ENCODE measurements at regions of chr19 and their contacts with region 1.

Region 1: GRCh38 chr19:12333162-12334159 is at the start of gene ZNF563:
- DNase-seq: peak; percentile 96 to 98 (median 96)
- H3K4me3 ChIP-seq: peak within 1 kb of the TSS; percentile 74 to 82
- H3K4me3 Mint-ChIP-seq: peak within 1 kb of the TSS; percentile 96 to 100 (median 99)
- H3K27ac ChIP-seq: peak within 1 kb of the TSS; percentile 80
- H3K27ac Mint-ChIP-seq: peak within 1 kb of the TSS; percentile 83 to 99 (median 99)
- H3K4me1 ChIP-seq: peaks cover 27% of the 10 kb centered on the region
- H3K4me1 Mint-ChIP-seq: peaks cover 28 to 42% (median 37%) of the 10 kb centered on the region in 4 donors
- H3K27me3 ChIP-seq: no peaks in the 10 kb centered on the region
- H3K27me3 Mint-ChIP-seq: no peaks in the 10 kb centered on the region
- total RNA-seq, gene ZNF563: 15.0 to 15.6 TPM

Region 2: DNA sequence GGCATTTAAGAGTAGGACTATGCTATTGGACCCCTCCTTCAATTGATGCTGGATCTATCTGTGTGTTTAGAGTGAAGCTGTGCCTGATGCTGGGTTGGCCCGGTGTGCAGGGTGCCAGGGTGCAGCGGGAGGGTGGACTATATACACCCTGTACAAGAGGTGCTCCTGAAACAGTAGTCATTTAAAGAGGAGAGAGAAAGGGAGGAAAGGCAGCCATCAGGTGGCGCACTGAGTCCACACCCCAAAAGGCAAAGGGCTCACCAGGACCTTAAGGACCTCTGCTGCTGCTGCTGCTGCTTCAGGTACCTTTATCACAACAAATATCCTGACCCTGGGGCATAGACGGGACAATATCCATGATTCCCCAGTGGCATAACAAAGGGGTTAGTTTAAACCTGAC is 131.2 kb before region 1 on chr19:
- CTCF ChIA-PET with region 1: interaction called, 4 read pairs
- POLR2A ChIA-PET with region 1: interaction called, 3 read pairs
- intact Hi-C with region 1: loop called (anchors 5 kb)
- DNase-seq: peak; percentile 41 to 57 (median 50)
- H3K4me3 ChIP-seq: no peak overlapping the region
- H3K4me3 Mint-ChIP-seq: no peak overlapping the region
- H3K27ac ChIP-seq: no peak overlapping the region
- H3K27ac Mint-ChIP-seq: no peak overlapping the region
- H3K4me1 ChIP-seq: peaks cover 8% of the 10 kb centered on the region
- H3K4me1 Mint-ChIP-seq: peaks cover 6 to 24% (median 6%) of the 10 kb centered on the region in 4 donors
- H3K27me3 ChIP-seq: no peaks in the 10 kb centered on the region
- H3K27me3 Mint-ChIP-seq: no peaks in the 10 kb centered on the region

Region 3: DNA sequence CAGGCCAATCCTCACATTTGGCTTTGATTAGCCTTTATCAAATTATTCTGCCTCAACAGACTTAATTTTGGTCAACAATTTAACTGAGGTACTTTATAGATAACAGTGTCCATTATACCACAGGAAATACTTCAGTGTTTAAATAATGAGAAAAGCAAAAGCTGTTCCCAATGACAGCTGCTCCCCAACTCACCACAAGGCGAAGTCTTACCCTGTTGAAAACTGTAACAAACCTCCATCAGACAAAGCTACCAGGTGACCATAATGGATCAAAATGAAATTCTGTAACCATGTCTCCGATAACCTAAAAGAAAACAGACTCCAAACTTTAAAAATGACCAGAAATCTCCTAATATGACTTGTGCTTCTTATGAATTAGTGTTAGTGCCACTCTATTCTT is 89.1 kb before region 1 on chr19:
- CTCF ChIA-PET with region 1: no interaction called
- POLR2A ChIA-PET with region 1: no interaction called
- intact Hi-C with region 1: no loop called
- DNase-seq: no peak
- H3K4me3 ChIP-seq: no peak overlapping the region
- H3K4me3 Mint-ChIP-seq: no peak overlapping the region
- H3K27ac ChIP-seq: no peak overlapping the region
- H3K27ac Mint-ChIP-seq: no peak overlapping the region
- H3K4me1 ChIP-seq: no peaks in the 10 kb centered on the region
- H3K4me1 Mint-ChIP-seq: no peaks in the 10 kb centered on the region
- H3K27me3 ChIP-seq: no peaks in the 10 kb centered on the region
- H3K27me3 Mint-ChIP-seq: no peaks in the 10 kb centered on the region

Region 4: DNA sequence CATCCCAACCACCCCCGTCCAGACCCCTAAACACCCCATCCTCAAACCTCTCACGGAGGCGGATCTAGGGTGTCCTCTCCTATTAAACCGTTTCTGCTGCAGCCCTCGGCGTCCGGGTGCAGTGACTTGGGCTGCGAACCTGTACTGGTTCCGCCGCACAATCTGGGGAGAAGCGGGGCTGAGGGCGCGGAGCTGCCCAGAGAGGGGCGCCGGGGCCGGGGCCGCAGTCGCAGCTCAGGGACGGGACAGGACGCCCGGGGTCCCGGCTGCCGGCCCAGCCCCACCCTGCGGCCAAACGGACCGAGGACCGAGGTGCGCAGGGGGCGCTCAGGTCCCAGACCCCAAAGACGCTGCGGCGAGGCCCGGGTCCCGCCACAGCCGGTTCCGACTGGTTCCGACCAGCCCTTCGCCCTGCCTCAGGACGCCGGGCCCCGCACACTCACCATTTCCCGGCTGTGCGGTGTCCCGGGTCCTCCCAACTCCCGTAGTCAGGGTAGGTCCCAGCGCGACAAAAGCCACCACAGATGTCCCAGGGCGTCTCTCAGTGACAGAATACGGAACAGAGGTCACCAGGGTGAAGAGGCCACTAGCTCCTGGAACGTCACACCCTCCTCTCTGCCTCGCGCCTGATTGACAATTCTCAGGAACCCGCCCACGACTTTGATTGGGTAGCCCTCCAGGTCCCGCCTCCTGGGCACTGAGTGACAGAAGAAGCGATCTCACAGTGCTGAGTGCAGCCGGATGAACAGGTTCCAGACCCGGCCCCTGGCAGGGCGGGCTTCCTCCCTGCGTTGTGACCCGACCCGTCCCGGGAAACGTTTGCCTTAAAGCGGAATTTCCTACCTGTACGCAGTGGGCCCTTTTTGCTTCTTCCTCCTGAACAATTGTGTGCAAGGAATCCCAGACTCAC is 39.0 kb before region 1 on chr19 and contains the start of gene ZNF44:
- CTCF ChIA-PET with region 1: no interaction called
- POLR2A ChIA-PET with region 1: interaction called, 148 read pairs
- intact Hi-C with region 1: loop called (anchors 1 kb)
- DNase-seq: peak; percentile 93 to 97 (median 94)
- H3K4me3 ChIP-seq: peak within 1 kb of the TSS; percentile 73 to 79
- H3K4me3 Mint-ChIP-seq: peak within 1 kb of the TSS; percentile 99 to 100 (median 99)
- H3K27ac ChIP-seq: peak within 1 kb of the TSS; percentile 80
- H3K27ac Mint-ChIP-seq: peak within 1 kb of the TSS; percentile 97 to 100 (median 99)
- H3K4me1 ChIP-seq: peaks cover 37% of the 10 kb centered on the region
- H3K4me1 Mint-ChIP-seq: peaks cover 26 to 44% (median 36%) of the 10 kb centered on the region in 4 donors
- H3K27me3 ChIP-seq: no peaks in the 10 kb centered on the region
- H3K27me3 Mint-ChIP-seq: no peaks in the 10 kb centered on the region
- total RNA-seq, gene ZNF44: 62.2 TPM

Region 5: DNA sequence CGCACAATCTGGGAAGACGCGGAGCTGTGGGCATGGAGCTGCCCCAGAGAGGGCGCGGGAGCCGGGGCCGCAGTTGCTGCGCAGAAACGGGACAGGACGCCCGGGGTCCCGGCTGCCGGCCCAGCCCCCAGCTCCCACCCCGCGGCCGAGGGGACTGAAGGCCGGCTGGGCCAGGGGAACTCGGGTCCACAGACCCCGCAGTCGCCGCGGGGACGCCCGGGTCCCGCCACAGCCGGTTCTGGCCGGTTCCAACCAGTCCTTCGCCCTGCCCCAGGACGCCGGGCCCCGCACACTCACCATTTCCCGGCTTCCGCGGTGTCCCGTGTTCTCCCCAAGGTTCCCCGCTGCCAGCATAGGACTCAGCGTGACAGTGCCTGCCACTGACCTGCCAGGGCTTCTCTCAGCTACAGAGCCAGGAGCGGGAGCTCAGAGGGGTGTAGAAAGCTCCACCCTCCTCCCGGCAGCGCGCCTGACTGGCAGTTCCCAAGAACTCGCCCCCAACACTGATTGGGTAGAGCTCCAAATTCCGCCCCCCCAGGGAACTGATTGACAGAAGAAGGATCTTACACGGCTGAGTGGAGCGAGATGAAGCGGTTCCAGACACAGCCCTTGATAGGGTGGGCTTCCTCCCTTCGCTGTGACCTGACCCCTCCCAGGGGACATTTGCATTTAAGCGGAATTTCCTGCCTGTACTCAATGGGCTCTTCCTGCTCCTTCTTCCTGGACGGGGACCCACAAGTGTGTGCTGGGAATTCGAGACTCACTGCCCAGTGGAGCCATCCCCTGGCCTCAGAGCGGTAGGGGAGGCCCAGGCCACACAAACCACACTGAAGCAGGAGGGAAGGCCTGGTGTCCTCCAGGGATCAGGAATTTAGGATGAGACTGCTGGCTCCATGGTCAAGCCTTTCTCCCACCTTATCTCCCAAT is 32.0 kb after region 1 on chr19 and contains the start of gene ZNF442:
- CTCF ChIA-PET with region 1: interaction called, 3 read pairs
- POLR2A ChIA-PET with region 1: interaction called, 23 read pairs
- intact Hi-C with region 1: loop called (anchors 2 kb)
- DNase-seq: peak; percentile 71 to 84 (median 75)
- H3K4me3 ChIP-seq: peak within 1 kb of the TSS; percentile 62 to 69
- H3K4me3 Mint-ChIP-seq: peak within 1 kb of the TSS; percentile 91 to 98 (median 95)
- H3K27ac ChIP-seq: peak within 1 kb of the TSS; percentile 41
- H3K27ac Mint-ChIP-seq: peak within 1 kb of the TSS; percentile 41 to 90 (median 84)
- H3K4me1 ChIP-seq: peaks cover 17% of the 10 kb centered on the region
- H3K4me1 Mint-ChIP-seq: peaks cover 9 to 29% (median 20%) of the 10 kb centered on the region in 4 donors
- H3K27me3 ChIP-seq: no peaks in the 10 kb centered on the region
- H3K27me3 Mint-ChIP-seq: peaks cover 3 to 5% of the 10 kb centered on the region in 2 donors
- total RNA-seq, gene ZNF442: 2.5 to 3.8 TPM

Region 6: DNA sequence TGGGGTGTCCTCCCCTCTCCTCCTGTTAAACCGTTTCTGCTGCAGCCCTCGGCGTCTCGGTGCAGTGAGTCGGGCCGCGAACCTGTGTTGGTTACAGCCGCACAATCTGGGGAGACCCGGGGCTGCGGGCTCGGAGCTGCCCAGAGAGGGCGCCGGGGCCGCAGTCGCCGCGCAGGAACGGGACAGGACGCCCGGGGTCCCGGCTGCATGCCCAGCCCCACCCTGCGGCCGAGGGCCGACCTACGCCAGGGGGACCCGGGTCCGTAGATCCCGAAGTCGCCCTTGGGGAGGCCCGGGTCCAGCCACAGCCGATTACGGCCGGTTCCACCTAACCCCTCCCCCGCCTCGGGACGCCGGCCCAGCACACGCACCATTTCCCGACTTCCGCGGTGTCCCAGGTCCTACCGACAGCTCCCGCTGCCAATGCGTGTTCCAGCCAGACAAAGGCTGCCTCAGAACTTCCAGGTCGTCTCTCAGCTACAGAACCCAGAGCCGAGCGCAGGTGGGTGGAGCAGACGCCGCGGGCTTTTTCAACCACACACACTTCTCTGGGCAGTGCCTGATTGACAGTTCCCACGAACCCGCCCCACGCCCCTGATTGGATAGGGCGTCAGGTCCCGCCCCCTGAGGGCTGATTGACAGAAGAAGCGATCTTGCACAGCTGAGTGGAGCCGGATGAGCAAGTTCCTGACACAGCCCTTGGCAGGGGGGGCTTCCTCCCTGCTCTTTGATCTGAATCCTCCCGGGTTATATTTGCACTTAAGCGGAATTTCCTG is 107.3 kb after region 1 on chr19 and contains the start of gene ZNF443:
- CTCF ChIA-PET with region 1: no interaction called
- POLR2A ChIA-PET with region 1: interaction called, 17 read pairs
- intact Hi-C with region 1: no loop called
- DNase-seq: peak; percentile 97 to 99 (median 98)
- H3K4me3 ChIP-seq: peak within 1 kb of the TSS; percentile 52 to 76
- H3K4me3 Mint-ChIP-seq: peak within 1 kb of the TSS; percentile 99 to 100 (median 100)
- H3K27ac ChIP-seq: peak within 1 kb of the TSS; percentile 57
- H3K27ac Mint-ChIP-seq: peak within 1 kb of the TSS; percentile 94 to 99 (median 96)
- H3K4me1 ChIP-seq: peaks cover 4% of the 10 kb centered on the region
- H3K4me1 Mint-ChIP-seq: peaks cover 7 to 26% (median 17%) of the 10 kb centered on the region in 4 donors
- H3K27me3 ChIP-seq: no peaks in the 10 kb centered on the region
- H3K27me3 Mint-ChIP-seq: no peaks in the 10 kb centered on the region
- total RNA-seq, gene ZNF443: 9.9 to 10.3 TPM

Region 7: GRCh38 chr19:12551060-12551832 is 217.8 kb after region 1 on chr19 and contains the start of gene ZNF564:
- CTCF ChIA-PET with region 1: no interaction called
- POLR2A ChIA-PET with region 1: interaction called, 10 read pairs
- intact Hi-C with region 1: no loop called
- DNase-seq: peak; percentile 94 to 98 (median 95)
- H3K4me3 ChIP-seq: peak within 1 kb of the TSS; percentile 44 to 98
- H3K4me3 Mint-ChIP-seq: peak within 1 kb of the TSS; percentile 92 to 100 (median 98)
- H3K27ac ChIP-seq: peak within 1 kb of the TSS; percentile 83
- H3K27ac Mint-ChIP-seq: peak within 1 kb of the TSS; percentile 91 to 99 (median 97)
- H3K4me1 ChIP-seq: peaks cover 42% of the 10 kb centered on the region
- H3K4me1 Mint-ChIP-seq: peaks cover 28 to 56% (median 39%) of the 10 kb centered on the region in 4 donors
- H3K27me3 ChIP-seq: no peaks in the 10 kb centered on the region
- H3K27me3 Mint-ChIP-seq: no peaks in the 10 kb centered on the region
- total RNA-seq, gene ZNF564: 29.2 to 30.6 TPM

Region 8: GRCh38 chr19:12703046-12703445 is 369.6 kb after region 1 on chr19:
- CTCF ChIA-PET with region 1: no interaction called
- POLR2A ChIA-PET with region 1: no interaction called
- intact Hi-C with region 1: no loop called
- DNase-seq: no peak
- H3K4me3 ChIP-seq: no peak overlapping the region
- H3K4me3 Mint-ChIP-seq: no peak overlapping the region
- H3K27ac ChIP-seq: no peak overlapping the region
- H3K27ac Mint-ChIP-seq: no peak overlapping the region
- H3K4me1 ChIP-seq: no peaks in the 10 kb centered on the region
- H3K4me1 Mint-ChIP-seq: peaks cover 0 to 3% (median 2%) of the 10 kb centered on the region in 4 donors
- H3K27me3 ChIP-seq: no peaks in the 10 kb centered on the region
- H3K27me3 Mint-ChIP-seq: no peaks in the 10 kb centered on the region

Measured in CD4-positive, alpha-beta memory T cell (primary cell).